Activated naive CD4-positive, alpha-beta T cell treated with anti-CD3 and anti-CD28 coated beads for 36 hours (primary cell): ENCODE measurements at regions of chr18 and their contacts with region 1.

Region 1: GRCh38 chr18:24368749-24369148 is 28.9 kb downstream of the OSBPL1A start:
- DNase-seq: peak; percentile 84
- H3K4me3 Mint-ChIP-seq: no peak overlapping the region
- H3K27ac Mint-ChIP-seq: peak overlapping the region; percentile 19
- H3K4me1 Mint-ChIP-seq: peaks cover 23% of the 10 kb centered on the region
- H3K27me3 Mint-ChIP-seq: no peaks in the 10 kb centered on the region

Region 2: DNA sequence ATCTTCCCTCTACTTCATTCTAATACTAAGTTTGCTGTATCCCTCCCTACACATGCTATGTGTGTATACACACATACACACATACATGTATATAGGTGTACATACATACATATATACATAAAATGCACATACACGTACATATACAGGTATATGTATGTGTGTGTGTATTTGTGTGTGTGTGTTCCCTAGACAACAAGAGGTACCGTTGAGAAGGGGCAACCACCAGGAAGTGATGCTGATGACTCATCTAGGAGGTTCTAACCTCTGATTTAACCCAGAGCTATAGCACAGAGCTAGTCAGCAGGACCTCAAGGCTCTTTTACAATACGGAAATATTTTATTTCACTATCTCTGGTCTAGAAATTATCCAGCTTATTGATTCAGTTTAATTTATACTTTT is 540.3 kb before region 1 on chr18:
- CTCF ChIA-PET with region 1: no interaction called
- intact Hi-C with region 1: loop called (anchors 10 kb)
- DNase-seq: peak; percentile 61
- H3K4me3 Mint-ChIP-seq: no peak overlapping the region
- H3K27ac Mint-ChIP-seq: no peak overlapping the region
- H3K4me1 Mint-ChIP-seq: peaks cover 37% of the 10 kb centered on the region
- H3K27me3 Mint-ChIP-seq: no peaks in the 10 kb centered on the region

Region 3: GRCh38 chr18:24014062-24014985 is 354.4 kb before region 1 on chr18 and contains the start of gene TTC39C:
- CTCF ChIA-PET with region 1: no interaction called
- intact Hi-C with region 1: loop called (anchors 5 kb)
- DNase-seq: peak; percentile 87
- H3K4me3 Mint-ChIP-seq: peak within 1 kb of the TSS; percentile 91
- H3K27ac Mint-ChIP-seq: peak within 1 kb of the TSS; percentile 89
- H3K4me1 Mint-ChIP-seq: peaks cover 69% of the 10 kb centered on the region
- H3K27me3 Mint-ChIP-seq: no peaks in the 10 kb centered on the region
- total RNA-seq, gene TTC39C: 39.9 to 44.2 TPM

Region 4: GRCh38 chr18:24397694-24398365 is 29.1 kb after region 1 on chr18 and contains the start of gene OSBPL1A:
- CTCF ChIA-PET with region 1: interaction called, 5 read pairs
- intact Hi-C with region 1: loop called (anchors 1 kb)
- DNase-seq: peak; percentile 88
- H3K4me3 Mint-ChIP-seq: peak within 1 kb of the TSS; percentile 76
- H3K27ac Mint-ChIP-seq: no peak within 1 kb of the TSS
- H3K4me1 Mint-ChIP-seq: peaks cover 18% of the 10 kb centered on the region
- H3K27me3 Mint-ChIP-seq: peaks cover 15% of the 10 kb centered on the region
- total RNA-seq, gene OSBPL1A: 2.4 to 2.7 TPM

Region 5: GRCh38 chr18:24488824-24489493 is 120.2 kb after region 1 on chr18:
- CTCF ChIA-PET with region 1: interaction called, 273 read pairs
- intact Hi-C with region 1: no loop called
- DNase-seq: no peak
- H3K4me3 Mint-ChIP-seq: no peak overlapping the region
- H3K27ac Mint-ChIP-seq: no peak overlapping the region
- H3K4me1 Mint-ChIP-seq: peaks cover 3% of the 10 kb centered on the region
- H3K27me3 Mint-ChIP-seq: peaks cover 6% of the 10 kb centered on the region

Region 6: DNA sequence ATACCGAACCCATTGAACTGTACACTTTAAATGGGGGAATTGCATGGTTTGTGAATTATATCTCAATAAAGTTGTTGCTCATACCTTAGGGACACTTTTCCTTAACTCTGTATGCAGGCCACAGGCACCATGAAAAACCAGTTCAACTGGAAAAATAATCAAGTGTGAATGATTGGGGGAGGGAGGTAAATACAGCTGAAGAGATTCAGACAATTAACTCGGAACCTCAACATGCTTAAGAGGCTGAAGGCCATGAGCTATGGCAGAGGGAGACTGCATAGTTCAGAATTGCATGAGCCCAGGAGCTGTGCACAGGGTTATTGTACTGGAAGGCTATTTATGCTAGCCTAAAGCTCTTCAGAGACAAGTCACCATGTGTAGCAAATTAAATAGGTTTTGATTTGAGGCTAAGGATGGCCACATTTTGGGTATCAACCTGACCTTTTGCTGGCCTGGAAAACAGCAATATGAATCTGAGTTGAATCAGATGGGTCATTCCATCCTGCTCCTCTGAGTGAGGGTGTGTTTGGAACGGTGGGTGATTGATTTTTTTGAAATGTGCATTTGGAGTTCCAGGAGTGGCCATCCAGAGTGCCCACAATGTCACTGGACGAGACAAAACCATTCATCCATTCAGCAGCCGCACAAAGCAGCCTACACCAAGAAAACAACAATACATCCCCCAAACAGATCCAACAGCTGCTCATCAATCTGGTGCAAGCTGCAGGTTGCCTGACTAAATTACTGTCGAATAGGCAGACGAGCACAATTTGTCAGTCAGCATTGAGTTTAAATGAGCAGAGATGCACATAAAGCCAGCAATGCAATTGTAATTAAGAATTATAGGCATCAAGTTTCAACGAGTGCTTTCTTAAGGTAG is 134.1 kb after region 1 on chr18:
- CTCF ChIA-PET with region 1: no interaction called
- intact Hi-C with region 1: no loop called
- DNase-seq: no peak
- H3K4me3 Mint-ChIP-seq: no peak overlapping the region
- H3K27ac Mint-ChIP-seq: no peak overlapping the region
- H3K4me1 Mint-ChIP-seq: no peaks in the 10 kb centered on the region
- H3K27me3 Mint-ChIP-seq: peaks cover 3% of the 10 kb centered on the region